Activated CD8-positive, alpha-beta T cell treated with anti-CD3 and anti-CD28 coated beads for 36 hours (primary cell): ENCODE measurements at regions of chr19 and their contacts with region 1.

Region 1: DNA sequence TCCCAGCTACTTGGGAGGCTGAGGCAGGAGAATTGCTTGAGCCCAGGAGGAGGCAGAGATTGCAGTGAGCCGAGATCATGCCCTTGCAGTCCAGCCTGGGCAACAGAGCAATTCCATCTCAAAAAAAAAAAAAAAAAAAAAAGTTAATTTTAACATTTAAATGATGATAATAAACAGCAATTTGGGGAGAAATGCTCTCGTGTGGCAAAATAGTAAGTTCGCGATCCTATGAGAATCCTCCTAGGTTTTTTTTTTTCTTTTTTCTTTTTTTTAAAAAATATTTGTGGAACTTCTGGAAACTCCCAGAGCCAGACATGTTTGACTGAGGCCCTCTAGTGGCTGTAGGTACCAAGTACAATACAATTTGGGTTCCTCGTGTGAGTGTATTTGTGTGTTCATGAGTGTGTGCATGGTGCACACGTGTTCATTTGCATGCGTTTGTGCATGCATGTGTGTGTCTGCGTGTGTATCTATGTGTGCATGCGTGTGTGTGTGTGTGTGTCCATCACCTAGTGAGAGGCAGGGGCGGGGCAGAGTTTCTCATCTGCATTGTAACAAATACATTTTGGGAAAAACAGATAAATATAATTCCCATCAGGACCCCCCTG is 31.2 kb downstream of the TMPRSS9 start:
- DNase-seq: peak; percentile 47
- ATAC-seq: peak; percentile 54
- H3K4me3 Mint-ChIP-seq: no peak overlapping the region
- H3K27ac Mint-ChIP-seq: no peak overlapping the region
- H3K4me1 Mint-ChIP-seq: peaks cover 19% of the 10 kb centered on the region
- H3K27me3 Mint-ChIP-seq: no peaks in the 10 kb centered on the region
- CTCF ChIP-seq: peak; percentile 94

Region 2: GRCh38 chr19:2269244-2269947 is 121.8 kb before region 1 on chr19:
- CTCF ChIA-PET with region 1: interaction called, 29 read pairs
- POLR2A ChIA-PET with region 1: interaction called, 3 read pairs
- intact Hi-C with region 1: no loop called
- DNase-seq: peak; percentile 98
- ATAC-seq: peak; percentile 80
- H3K4me3 Mint-ChIP-seq: peak overlapping the region; percentile 85
- H3K27ac Mint-ChIP-seq: peak overlapping the region; percentile 90
- H3K4me1 Mint-ChIP-seq: peaks cover 35% of the 10 kb centered on the region
- H3K27me3 Mint-ChIP-seq: no peaks in the 10 kb centered on the region
- CTCF ChIP-seq: no peak

Region 3: DNA sequence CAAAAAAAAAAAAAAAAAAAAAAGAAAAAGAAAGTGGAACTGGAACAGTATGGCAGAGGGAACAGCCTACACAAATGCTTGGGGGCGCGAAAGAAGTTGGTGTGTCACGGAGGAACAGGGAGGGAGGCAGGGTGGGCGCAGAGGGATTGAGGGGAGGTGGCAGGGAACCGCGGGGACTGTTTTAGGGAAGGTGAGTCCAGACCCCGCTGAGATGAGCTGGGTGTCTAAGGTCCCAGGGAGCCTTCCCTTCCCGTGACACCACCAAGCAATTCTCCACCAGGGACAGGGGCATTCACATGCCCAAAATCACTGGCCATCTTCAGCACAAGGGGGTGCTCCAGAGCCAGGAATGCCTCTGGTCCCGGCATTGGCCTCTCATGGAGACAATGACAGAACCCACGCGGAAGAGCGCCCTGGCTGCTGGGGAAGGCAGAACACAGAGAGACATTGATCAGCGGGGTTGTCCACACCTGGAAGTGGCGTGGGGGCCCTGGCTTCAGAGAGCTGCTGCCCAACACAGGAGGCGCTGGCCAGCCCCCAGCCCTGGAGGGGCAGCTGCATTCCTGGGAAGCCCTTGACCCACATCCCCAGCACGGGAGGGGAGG is 116.2 kb before region 1 on chr19:
- CTCF ChIA-PET with region 1: interaction called, 29 read pairs
- POLR2A ChIA-PET with region 1: interaction called, 3 read pairs
- intact Hi-C with region 1: loop called (anchors 5 kb)
- DNase-seq: peak; percentile 60
- ATAC-seq: no peak
- H3K4me3 Mint-ChIP-seq: no peak overlapping the region
- H3K27ac Mint-ChIP-seq: peak overlapping the region; percentile 52
- H3K4me1 Mint-ChIP-seq: peaks cover 31% of the 10 kb centered on the region
- H3K27me3 Mint-ChIP-seq: no peaks in the 10 kb centered on the region
- CTCF ChIP-seq: no peak

Region 4: DNA sequence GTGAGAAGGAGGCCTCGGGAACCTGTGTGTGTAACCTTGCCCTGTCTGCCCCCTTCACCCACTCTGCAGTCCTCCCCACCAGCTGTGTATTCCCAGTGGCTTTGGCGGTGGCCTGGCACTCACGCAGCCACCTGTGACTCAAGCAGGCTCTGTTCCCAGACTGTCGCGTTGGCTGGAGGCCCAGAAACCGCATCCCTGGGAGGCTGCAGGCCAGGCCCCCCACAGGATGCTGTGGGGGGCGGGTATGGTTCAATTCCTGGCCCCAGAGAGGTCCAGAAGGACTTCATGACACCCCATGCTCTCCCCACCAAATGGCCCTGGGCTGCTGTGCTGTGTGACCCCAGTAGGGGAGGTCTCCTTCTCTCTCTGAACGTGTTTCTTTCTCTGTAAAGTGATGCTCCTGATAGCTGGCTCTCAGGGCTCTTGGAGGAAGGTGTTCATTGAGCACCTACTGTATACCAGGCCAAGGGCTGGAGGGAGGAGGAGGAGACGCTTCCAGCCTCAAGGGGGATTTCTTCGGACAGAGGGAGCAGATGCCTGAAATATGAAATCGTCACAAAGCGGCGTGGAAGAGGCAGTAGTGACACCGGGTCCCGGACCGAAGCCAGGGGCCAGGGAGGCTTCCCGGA is 81.4 kb before region 1 on chr19:
- CTCF ChIA-PET with region 1: no interaction called
- POLR2A ChIA-PET with region 1: no interaction called
- intact Hi-C with region 1: no loop called
- DNase-seq: no peak
- ATAC-seq: no peak
- H3K4me3 Mint-ChIP-seq: no peak overlapping the region
- H3K27ac Mint-ChIP-seq: no peak overlapping the region
- H3K4me1 Mint-ChIP-seq: peaks cover 2% of the 10 kb centered on the region
- H3K27me3 Mint-ChIP-seq: peaks cover 45% of the 10 kb centered on the region
- CTCF ChIP-seq: no peak

Region 5: DNA sequence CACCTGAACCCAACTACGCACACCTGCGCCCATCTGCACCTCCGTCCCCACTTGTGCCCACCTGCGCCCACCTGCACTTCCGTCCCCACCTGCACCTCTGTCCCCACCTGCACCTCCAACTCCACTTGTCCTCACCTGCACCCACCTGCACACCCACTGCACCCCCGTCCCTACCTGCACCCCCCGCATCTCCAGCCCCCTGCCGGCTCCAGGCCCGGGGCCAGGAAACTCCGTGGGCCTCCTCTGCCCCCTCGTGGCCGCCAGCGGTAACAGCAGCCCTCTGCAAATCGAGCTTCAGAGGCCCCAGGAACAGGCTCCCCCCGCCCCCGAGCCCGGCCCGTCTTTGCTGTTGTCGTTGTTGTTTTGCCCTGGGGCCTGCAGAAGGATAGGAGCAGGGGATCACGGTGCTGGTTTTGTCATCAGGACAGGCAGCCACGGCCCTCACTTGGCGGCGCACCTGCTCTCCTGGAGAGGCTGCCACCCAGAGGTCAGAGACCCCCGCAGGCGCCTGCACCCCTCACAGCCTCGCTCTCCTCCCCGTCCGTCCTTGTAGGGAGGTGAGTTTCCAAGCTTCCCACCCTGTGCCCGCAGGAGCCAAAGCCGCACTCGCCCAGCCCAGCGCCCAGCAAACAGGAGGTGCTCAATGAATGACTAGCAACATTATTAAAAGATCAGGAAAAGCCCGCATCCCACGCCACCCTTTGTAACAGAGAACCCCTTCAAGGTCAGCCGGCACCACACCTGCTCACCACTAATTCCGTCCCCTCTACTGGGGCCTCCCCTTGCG is 245.9 kb after region 1 on chr19:
- CTCF ChIA-PET with region 1: interaction called, 14 read pairs
- POLR2A ChIA-PET with region 1: no interaction called
- intact Hi-C with region 1: no loop called
- DNase-seq: peak; percentile 83
- ATAC-seq: peak; percentile 97
- H3K4me3 Mint-ChIP-seq: no peak overlapping the region
- H3K27ac Mint-ChIP-seq: no peak overlapping the region
- H3K4me1 Mint-ChIP-seq: peaks cover 14% of the 10 kb centered on the region
- H3K27me3 Mint-ChIP-seq: peaks cover 3% of the 10 kb centered on the region
- CTCF ChIP-seq: peak; percentile 78